ENCODE measurements at regions of chr13 and their contacts with region 1.

Region 1: GRCh38 chr13:47726351-47726750 is 274.7 kb downstream of the SUCLA2 start:
- DNase-seq: no peak
- H3K4me3 ChIP-seq: no peak overlapping the region
- H3K27ac ChIP-seq: no peak overlapping the region
- H3K4me1 ChIP-seq: no peaks in the 10 kb centered on the region
- H3K27me3 ChIP-seq: no peaks in the 10 kb centered on the region
- CTCF ChIP-seq: no peak
- POLR2A ChIP-seq: no peak

Region 2: GRCh38 chr13:48626077-48626449 is 899.7 kb after region 1 on chr13:
- CTCF ChIA-PET with region 1: no interaction called
- POLR2A ChIA-PET with region 1: interaction called, 12 read pairs
- dilution Hi-C with region 1: no loop called
- intact Hi-C with region 1: no loop called
- DNase-seq: peak; percentile 94
- H3K4me3 ChIP-seq: no peak overlapping the region
- H3K27ac ChIP-seq: peak overlapping the region; percentile 63
- H3K4me1 ChIP-seq: peaks cover 10% of the 10 kb centered on the region
- H3K27me3 ChIP-seq: peaks cover 0 to 19% of the 10 kb centered on the region in 2 experiments
- CTCF ChIP-seq: no peak
- POLR2A ChIP-seq: no peak

Measured in endothelial cell of umbilical vein (primary cell).